Natural killer cell (primary cell): ENCODE measurements at regions of chr18 and their contacts with region 1.

Region 1: GRCh38 chr18:44838971-44839666 is 158.4 kb downstream of the SETBP1 start:
- DNase-seq: peak; percentile 70 to 73
- ATAC-seq: peak; percentile 94 to 97 (median 94)
- H3K4me3 ChIP-seq: no peak overlapping the region
- H3K4me3 Mint-ChIP-seq: peak overlapping the region; percentile 67
- H3K27ac ChIP-seq: peak overlapping the region; percentile 69
- H3K27ac Mint-ChIP-seq: peak overlapping the region; percentile 57 to 76
- H3K4me1 ChIP-seq: peaks cover 33% of the 10 kb centered on the region
- H3K4me1 Mint-ChIP-seq: peaks cover 68 to 75% of the 10 kb centered on the region in 2 donors
- H3K27me3 ChIP-seq: no peaks in the 10 kb centered on the region
- H3K27me3 Mint-ChIP-seq: peaks cover 0 to 2% of the 10 kb centered on the region in 2 donors
- CTCF ChIP-seq: no peak

Region 2: DNA sequence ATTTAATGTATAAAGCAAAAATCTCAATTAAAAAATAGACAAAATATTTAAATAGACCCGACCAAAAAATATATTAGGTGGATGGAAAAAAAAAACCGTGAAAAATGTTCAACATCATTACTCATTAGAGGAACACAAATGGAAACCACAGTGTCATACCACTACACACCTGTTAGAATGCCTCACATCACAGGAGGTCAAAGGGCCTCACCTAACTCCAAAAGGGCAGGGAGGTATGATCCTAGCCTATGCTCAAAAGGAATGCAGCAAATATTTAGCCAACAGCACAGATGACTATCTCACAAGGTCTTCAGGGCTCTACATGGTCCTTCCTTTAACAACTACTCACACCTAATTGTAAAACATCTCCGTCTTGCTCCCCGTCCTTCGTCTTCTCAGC is 344.0 kb before region 1 on chr18:
- intact Hi-C with region 1: no loop called
- DNase-seq: no peak
- ATAC-seq: no peak
- H3K4me3 ChIP-seq: no peak overlapping the region
- H3K4me3 Mint-ChIP-seq: no peak overlapping the region
- H3K27ac ChIP-seq: no peak overlapping the region
- H3K27ac Mint-ChIP-seq: no peak overlapping the region
- H3K4me1 ChIP-seq: no peaks in the 10 kb centered on the region
- H3K4me1 Mint-ChIP-seq: peaks cover 6 to 14% of the 10 kb centered on the region in 2 donors
- H3K27me3 ChIP-seq: no peaks in the 10 kb centered on the region
- H3K27me3 Mint-ChIP-seq: peaks cover 0 to 4% of the 10 kb centered on the region in 2 donors
- CTCF ChIP-seq: no peak

Region 3: DNA sequence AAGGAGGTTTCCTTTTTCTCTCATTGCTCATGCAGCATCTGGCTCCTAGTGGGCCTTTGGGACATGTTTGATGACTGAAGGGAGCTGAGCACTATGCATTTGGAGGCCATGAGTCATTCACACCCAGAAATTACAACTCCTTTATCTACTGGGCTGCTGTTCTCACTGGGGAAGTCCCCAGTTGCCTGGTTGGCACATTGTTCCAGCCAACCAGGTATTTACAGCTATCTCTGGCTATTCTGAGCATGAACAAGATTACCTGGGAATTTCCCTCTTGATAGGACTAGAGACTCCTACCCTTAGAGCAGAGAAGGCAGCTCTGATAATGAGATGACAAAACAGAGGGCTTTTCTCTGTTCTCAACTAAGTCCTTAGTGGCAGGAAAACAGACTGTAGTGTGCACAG is 48.1 kb after region 1 on chr18:
- intact Hi-C with region 1: loop called (anchors 5 kb)
- DNase-seq: peak; percentile 22 to 50
- ATAC-seq: peak; percentile 93 to 96 (median 93)
- H3K4me3 ChIP-seq: no peak overlapping the region
- H3K4me3 Mint-ChIP-seq: peak overlapping the region; percentile 18
- H3K27ac ChIP-seq: peak overlapping the region; percentile 1
- H3K27ac Mint-ChIP-seq: peak overlapping the region; percentile 85 to 96
- H3K4me1 ChIP-seq: peaks cover 8% of the 10 kb centered on the region
- H3K4me1 Mint-ChIP-seq: peaks cover 25 to 30% of the 10 kb centered on the region in 2 donors
- H3K27me3 ChIP-seq: no peaks in the 10 kb centered on the region
- H3K27me3 Mint-ChIP-seq: no peaks in the 10 kb centered on the region
- CTCF ChIP-seq: no peak

Region 4: GRCh38 chr18:45106331-45106774 is 267.2 kb after region 1 on chr18:
- intact Hi-C with region 1: loop called (anchors 5 kb)
- DNase-seq: peak; percentile 48 to 59
- ATAC-seq: peak; percentile 84 to 94 (median 92)
- H3K4me3 ChIP-seq: no peak overlapping the region
- H3K4me3 Mint-ChIP-seq: no peak overlapping the region
- H3K27ac ChIP-seq: peak overlapping the region; percentile 42
- H3K27ac Mint-ChIP-seq: no peak overlapping the region
- H3K4me1 ChIP-seq: peaks cover 35% of the 10 kb centered on the region
- H3K4me1 Mint-ChIP-seq: peaks cover 35 to 49% of the 10 kb centered on the region in 2 donors
- H3K27me3 ChIP-seq: no peaks in the 10 kb centered on the region
- H3K27me3 Mint-ChIP-seq: peaks cover 14 to 34% of the 10 kb centered on the region in 2 donors
- CTCF ChIP-seq: no peak